ENCODE measurements at regions of chr18 and their contacts with region 1.

Region 1: DNA sequence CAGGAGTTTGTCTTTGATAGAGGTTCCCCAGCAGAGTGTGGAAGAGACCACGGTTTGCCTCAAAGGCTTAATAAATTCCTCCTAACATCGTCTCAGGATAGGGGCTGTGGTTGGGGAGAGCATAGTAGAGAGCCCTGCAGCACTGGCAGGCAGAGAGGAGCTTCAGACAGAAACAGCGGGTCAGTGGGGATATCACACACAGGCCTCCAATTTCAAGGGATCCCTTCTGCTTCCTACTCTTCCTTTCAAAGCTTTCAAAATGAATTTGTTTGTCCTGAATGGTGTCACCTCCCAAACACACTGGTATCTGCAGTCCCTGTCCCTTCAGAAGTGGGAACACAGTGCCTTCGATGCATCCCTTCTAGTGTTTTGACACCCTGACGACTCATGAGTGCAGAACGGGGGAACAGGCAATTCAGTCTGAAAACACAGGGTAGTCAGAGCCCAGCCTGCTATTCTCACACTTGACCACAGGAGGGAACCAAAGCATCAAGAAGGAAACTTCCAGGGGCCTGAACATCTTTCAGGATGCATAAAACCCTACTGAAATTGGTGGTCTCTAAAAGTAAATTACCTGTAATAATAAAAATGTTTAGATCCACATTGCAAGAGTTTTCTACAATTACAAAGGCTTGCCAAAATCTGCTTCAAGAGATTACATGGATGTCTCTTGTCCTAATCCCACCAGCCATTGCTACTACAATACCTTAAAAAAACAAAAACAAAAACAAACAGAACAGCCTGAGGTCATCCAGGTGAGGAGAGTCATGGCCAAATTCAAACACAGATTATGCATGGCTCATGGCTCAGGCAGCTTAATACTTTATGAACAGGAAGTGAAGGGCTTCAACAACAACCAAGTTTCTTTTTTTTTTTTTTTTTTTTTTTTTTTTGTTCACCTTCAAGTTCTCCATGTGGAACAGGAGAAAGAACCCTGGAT is 49.8 kb downstream of the SLC14A2 start:
- DNase-seq: no peak
- H3K4me3 ChIP-seq: no peak overlapping the region
- CTCF ChIP-seq: peak; percentile 83

Region 2: GRCh38 chr18:45596036-45596435 is 69.1 kb before region 1 on chr18:
- CTCF ChIA-PET with region 1: no interaction called
- POLR2A ChIA-PET with region 1: no interaction called
- DNase-seq: no peak
- H3K4me3 ChIP-seq: no peak overlapping the region
- CTCF ChIP-seq: no peak

Region 3: GRCh38 chr18:45652303-45653080 is 12.6 kb before region 1 on chr18:
- CTCF ChIA-PET with region 1: interaction called, 17 read pairs
- POLR2A ChIA-PET with region 1: no interaction called
- DNase-seq: no peak
- H3K4me3 ChIP-seq: no peak overlapping the region
- CTCF ChIP-seq: no peak

Region 4: GRCh38 chr18:45690975-45691815 is 26.1 kb after region 1 on chr18:
- CTCF ChIA-PET with region 1: interaction called, 84 read pairs
- POLR2A ChIA-PET with region 1: interaction called, 3 read pairs
- DNase-seq: no peak
- H3K4me3 ChIP-seq: 0 out of 2 replicates have a peak overlapping the region, but pooled peaks have one; percentile 3
- CTCF ChIP-seq: peak; percentile 89

Region 5: DNA sequence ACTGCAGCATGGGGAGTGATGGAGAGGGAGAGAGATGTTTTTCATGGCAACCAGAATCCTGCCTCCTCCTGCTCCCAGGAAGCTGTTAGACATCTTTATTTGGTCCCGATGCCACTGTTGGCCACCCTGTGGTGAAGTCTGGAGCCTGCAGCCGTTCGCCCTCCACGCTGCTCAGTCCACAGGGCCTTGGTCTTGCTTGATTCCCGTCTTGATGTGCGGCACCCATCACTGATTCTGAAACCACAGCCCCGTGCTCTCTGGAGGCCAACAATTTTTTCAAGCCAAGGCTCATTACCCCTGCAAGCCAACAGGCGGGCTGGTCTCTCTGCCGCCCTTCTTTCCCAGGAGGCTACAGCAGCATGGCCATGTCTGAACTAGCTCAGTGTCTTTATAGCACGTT is 184.9 kb after region 1 on chr18:
- CTCF ChIA-PET with region 1: interaction called, 11 read pairs
- POLR2A ChIA-PET with region 1: no interaction called
- DNase-seq: no peak
- H3K4me3 ChIP-seq: no peak overlapping the region
- CTCF ChIP-seq: peak; percentile 44

Region 6: GRCh38 chr18:45879681-45880655 is 214.9 kb after region 1 on chr18:
- CTCF ChIA-PET with region 1: interaction called, 385 read pairs
- POLR2A ChIA-PET with region 1: interaction called, 3 read pairs
- DNase-seq: no peak
- H3K4me3 ChIP-seq: no peak overlapping the region
- CTCF ChIP-seq: peak; percentile 100

Region 7: GRCh38 chr18:45974088-45974536 is 309.0 kb after region 1 on chr18:
- CTCF ChIA-PET with region 1: interaction called, 73 read pairs
- POLR2A ChIA-PET with region 1: no interaction called
- DNase-seq: peak; percentile 63
- H3K4me3 ChIP-seq: no peak overlapping the region
- CTCF ChIP-seq: peak; percentile 73